Activated naive CD4-positive, alpha-beta T cell treated with anti-CD3 and anti-CD28 coated beads for 36 hours (primary cell): ENCODE measurements at regions of chr9 and their contacts with region 1.

Region 1: GRCh38 chr9:83622939-83623678 is at the start of gene IDNK:
- DNase-seq: peak; percentile 38
- H3K4me3 Mint-ChIP-seq: peak within 1 kb of the TSS; percentile 72
- H3K27ac Mint-ChIP-seq: peak within 1 kb of the TSS; percentile 93
- H3K4me1 Mint-ChIP-seq: peaks cover 24% of the 10 kb centered on the region
- H3K27me3 Mint-ChIP-seq: no peaks in the 10 kb centered on the region
- total RNA-seq, gene IDNK: 2.7 to 3.2 TPM

Region 2: DNA sequence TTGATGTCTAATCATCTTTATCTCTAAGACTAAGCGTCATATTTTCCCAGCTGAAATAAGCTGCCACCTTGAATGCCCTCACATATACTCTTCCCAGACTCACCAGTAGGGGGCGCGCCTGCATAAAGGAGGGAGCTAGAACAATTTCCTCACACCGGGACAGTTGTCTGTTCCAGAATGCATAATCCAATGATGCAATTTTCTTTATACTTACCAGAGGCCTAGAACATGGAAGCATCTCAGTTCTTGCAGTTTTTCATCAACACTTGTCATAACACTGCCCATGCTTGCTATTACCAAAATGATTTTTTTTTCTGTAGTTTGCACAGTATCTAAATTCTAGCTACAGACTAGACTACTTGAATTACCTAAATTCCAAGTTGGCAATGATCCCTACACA is 288.8 kb before region 1 on chr9:
- CTCF ChIA-PET with region 1: interaction called, 12 read pairs
- intact Hi-C with region 1: no loop called
- DNase-seq: peak; percentile 89
- H3K4me3 Mint-ChIP-seq: no peak overlapping the region
- H3K27ac Mint-ChIP-seq: no peak overlapping the region
- H3K4me1 Mint-ChIP-seq: peaks cover 3% of the 10 kb centered on the region
- H3K27me3 Mint-ChIP-seq: no peaks in the 10 kb centered on the region

Region 3: DNA sequence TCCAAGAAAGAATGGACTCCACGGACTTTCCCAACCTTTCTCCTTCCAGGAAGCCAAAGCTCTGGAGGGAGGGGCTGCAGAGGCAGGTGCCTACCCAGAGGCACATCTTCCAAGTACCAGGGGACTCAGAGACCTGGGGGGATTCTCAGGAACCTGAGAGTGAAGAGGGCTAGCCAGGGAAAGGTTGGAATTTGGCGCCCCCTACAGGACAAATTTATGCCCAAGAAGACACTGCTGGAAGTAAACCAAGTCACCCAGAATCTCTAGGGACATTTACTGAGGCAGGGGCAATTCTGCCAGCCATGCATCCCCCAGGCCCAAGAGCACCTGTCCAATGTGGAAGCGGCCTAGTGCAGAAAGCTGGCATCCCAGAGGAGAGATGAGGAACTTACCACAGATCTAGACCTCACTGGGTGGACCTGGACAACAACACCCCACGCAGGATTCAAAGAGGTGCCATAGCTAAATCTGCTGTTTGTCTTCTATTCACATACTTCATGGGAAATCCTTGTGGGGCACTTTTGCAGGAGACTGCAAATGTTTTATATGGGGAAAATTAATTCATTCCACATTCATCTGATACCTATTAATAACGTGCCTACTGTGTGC is 26.1 kb before region 1 on chr9:
- CTCF ChIA-PET with region 1: interaction called, 10 read pairs
- intact Hi-C with region 1: no loop called
- DNase-seq: peak; percentile 69
- H3K4me3 Mint-ChIP-seq: no peak overlapping the region
- H3K27ac Mint-ChIP-seq: no peak overlapping the region
- H3K4me1 Mint-ChIP-seq: no peaks in the 10 kb centered on the region
- H3K27me3 Mint-ChIP-seq: no peaks in the 10 kb centered on the region

Region 4: GRCh38 chr9:83707768-83708514 is 84.8 kb after region 1 on chr9 and contains the start of gene UBQLN1:
- CTCF ChIA-PET with region 1: interaction called, 3 read pairs
- intact Hi-C with region 1: loop called (anchors 1 kb)
- DNase-seq: peak; percentile 95
- H3K4me3 Mint-ChIP-seq: peak within 1 kb of the TSS; percentile 89
- H3K27ac Mint-ChIP-seq: peak within 1 kb of the TSS; percentile 98
- H3K4me1 Mint-ChIP-seq: peaks cover 37% of the 10 kb centered on the region
- H3K27me3 Mint-ChIP-seq: no peaks in the 10 kb centered on the region
- total RNA-seq, gene UBQLN1: 84.8 to 87.1 TPM

Region 5: GRCh38 chr9:83920927-83921707 is 298.0 kb after region 1 on chr9 and contains the start of gene KIF27:
- CTCF ChIA-PET with region 1: interaction called, 6 read pairs
- intact Hi-C with region 1: loop called (anchors 1 kb)
- DNase-seq: peak; percentile 98
- H3K4me3 Mint-ChIP-seq: peak within 1 kb of the TSS; percentile 82
- H3K27ac Mint-ChIP-seq: peak within 1 kb of the TSS; percentile 90
- H3K4me1 Mint-ChIP-seq: peaks cover 10% of the 10 kb centered on the region
- H3K27me3 Mint-ChIP-seq: no peaks in the 10 kb centered on the region
- total RNA-seq, gene KIF27: 2.7 to 3.8 TPM

Region 6: DNA sequence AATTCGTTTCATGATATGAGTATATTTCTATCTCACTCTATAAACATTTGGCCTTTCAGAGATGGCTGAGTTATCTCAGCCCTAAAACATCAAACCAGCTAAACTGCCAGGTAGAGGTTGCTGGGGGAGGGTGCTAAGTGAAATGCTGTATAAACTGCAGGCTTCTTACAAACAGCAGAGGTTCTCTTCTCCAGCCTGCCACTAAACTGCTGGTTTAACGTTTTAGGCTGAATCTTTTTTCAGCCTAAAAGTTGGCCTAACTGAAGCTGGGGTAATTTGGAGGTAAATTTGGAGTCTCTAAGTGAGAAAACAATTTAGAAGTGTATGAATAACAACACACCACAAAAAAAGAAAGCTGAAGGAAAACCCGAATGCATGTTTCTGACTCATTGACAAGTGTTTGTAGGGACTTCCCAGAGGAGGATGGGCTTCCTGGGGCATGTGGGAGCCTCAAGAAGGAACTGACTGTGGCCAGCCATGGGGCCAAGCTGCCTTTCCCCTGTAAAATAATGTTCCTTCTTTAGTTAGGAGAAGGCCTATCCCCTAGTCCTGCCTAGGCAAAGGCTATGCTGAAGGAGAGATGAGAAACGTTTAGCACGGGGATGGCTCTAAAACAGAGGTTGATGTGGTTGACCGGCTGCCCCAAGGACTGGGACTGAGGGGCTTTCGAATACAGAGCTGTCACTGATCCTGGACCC is 673.2 kb after region 1 on chr9:
- CTCF ChIA-PET with region 1: no interaction called
- intact Hi-C with region 1: loop called (anchors 10 kb)
- DNase-seq: peak; percentile 83
- H3K4me3 Mint-ChIP-seq: peak overlapping the region; percentile 52
- H3K27ac Mint-ChIP-seq: peak overlapping the region; percentile 99
- H3K4me1 Mint-ChIP-seq: peaks cover 60% of the 10 kb centered on the region
- H3K27me3 Mint-ChIP-seq: no peaks in the 10 kb centered on the region